Dendritic cell treated with granulocyte-macrophage colony-stimulating factor and Interleukin-4, amounts not matched to agents 40 ng/mL and 50 ng/mL, for 4 days (primary cell): ENCODE measurements at regions of chr7 and their contacts with region 1.

Region 1: DNA sequence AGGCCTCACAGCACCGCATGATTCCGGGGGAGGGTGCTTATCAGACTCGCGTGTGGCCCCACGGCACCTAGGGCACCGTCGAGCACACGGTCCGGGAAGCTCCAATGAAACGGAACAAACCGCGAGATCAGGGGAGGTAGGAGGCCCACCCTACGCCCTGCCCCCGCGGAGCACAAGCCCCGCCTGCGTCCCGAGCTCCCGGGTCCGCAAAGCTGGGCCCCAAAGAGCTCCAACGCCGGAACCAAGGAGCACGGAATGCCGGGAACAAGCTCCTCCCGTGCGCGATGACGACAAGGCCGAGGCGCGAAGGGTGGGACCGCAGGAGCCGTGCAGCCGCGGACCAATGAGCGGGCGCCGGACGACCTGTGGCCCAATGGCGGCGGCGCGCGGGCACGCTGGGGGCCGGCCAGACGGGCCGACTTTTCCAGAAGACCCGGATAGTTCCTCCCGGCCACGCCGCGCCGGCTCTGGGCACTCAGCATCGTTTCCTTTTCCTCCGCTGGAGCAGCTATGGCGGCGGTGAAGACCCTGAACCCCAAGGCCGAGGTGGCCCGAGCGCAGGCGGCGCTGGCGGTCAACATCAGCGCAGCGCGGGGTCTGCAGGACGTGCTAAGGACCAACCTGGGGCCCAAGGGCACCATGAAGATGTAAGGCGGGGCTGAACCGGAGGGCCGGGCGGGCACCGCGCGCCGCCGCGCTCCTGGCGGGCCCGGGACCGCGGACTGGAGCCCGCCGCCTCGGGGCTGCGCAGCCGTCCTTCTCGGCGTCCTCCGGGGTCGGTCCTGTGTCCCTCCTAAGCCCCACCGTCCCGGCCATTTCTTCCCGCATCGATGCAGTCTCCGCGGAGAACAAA is at the starts of genes CCT6A and PSPH:
- H3K4me3 Mint-ChIP-seq: peak within 1 kb of the TSS; percentile 97
- H3K27ac Mint-ChIP-seq: peak within 1 kb of the TSS; percentile 94
- H3K4me1 Mint-ChIP-seq: peaks cover 6% of the 10 kb centered on the region
- H3K27me3 Mint-ChIP-seq: no peaks in the 10 kb centered on the region

Region 2: DNA sequence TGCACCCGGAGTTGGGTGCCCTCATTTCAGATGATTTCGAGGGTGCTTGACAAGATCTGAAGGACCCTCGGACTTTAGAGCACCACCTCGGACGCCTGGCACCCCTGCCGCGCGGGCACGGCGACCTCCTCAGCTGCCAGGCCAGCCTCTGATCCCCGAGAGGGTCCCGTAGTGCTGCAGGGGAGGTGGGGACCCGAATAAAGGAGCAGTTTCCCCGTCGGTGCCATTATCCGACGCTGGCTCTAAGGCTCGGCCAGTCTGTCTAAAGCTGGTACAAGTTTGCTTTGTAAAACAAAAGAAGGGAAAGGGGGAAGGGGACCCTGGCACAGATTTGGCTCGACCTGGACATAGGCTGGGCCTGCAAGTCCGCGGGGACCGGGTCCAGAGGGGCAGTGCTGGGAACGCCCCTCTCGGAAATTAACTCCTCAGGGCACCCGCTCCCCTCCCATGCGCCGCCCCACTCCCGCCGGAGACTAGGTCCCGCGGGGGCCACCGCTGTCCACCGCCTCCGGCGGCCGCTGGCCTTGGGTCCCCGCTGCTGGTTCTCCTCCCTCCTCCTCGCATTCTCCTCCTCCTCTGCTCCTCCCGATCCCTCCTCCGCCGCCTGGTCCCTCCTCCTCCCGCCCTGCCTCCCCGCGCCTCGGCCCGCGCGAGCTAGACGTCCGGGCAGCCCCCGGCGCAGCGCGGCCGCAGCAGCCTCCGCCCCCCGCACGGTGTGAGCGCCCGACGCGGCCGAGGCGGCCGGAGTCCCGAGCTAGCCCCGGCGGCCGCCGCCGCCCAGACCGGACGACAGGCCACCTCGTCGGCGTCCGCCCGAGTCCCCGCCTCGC is 1033.0 kb before region 1 on chr7 and contains the start of gene EGFR:
- intact Hi-C with region 1: no loop called
- H3K4me3 Mint-ChIP-seq: no peak within 1 kb of the TSS
- H3K27ac Mint-ChIP-seq: no peak within 1 kb of the TSS
- H3K4me1 Mint-ChIP-seq: no peaks in the 10 kb centered on the region
- H3K27me3 Mint-ChIP-seq: peaks cover 55% of the 10 kb centered on the region

Region 3: GRCh38 chr7:55086413-55087201 is 965.0 kb before region 1 on chr7:
- intact Hi-C with region 1: no loop called
- H3K4me3 Mint-ChIP-seq: no peak overlapping the region
- H3K27ac Mint-ChIP-seq: no peak overlapping the region
- H3K4me1 Mint-ChIP-seq: no peaks in the 10 kb centered on the region
- H3K27me3 Mint-ChIP-seq: no peaks in the 10 kb centered on the region

Region 4: GRCh38 chr7:55951637-55952351 is 99.8 kb before region 1 on chr7 and contains the start of gene MRPS17:
- intact Hi-C with region 1: loop called (anchors 2 kb)
- H3K4me3 Mint-ChIP-seq: peak within 1 kb of the TSS; percentile 98
- H3K27ac Mint-ChIP-seq: peak within 1 kb of the TSS; percentile 96
- H3K4me1 Mint-ChIP-seq: peaks cover 9% of the 10 kb centered on the region
- H3K27me3 Mint-ChIP-seq: peaks cover 3% of the 10 kb centered on the region